Right lobe of liver (tissue), 6 donors: ENCODE measurements at regions of chr7 and their contacts with region 1.

Region 1: DNA sequence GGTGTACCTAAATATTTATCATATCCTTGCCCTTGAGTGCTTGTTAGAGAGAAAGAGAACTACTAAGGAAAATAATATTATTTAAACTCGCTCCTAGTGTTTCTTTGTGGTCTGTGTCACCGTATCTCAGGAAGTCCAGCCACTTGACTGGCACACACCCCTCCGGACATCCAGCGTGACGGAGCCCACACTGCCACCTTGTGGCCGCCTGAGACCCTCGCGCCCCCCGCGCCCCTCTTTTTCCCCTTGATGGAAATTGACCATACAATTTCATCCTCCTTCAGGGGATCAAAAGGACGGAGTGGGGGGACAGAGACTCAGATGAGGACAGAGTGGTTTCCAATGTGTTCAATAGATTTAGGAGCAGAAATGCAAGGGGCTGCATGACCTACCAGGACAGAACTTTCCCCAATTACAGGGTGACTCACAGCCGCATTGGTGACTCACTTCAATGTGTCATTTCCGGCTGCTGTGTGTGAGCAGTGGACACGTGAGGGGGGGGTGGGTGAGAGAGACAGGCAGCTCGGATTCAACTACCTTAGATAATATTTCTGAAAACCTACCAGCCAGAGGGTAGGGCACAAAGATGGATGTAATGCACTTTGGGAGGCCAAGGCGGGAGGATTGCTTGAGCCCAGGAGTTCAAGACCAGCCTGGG is 11.4 kb downstream of the SERPINE1 start:
- DNase-seq: peak; percentile 59 to 86 (median 62)
- ATAC-seq: peak; percentile 72 to 85 (median 74)
- H3K4me3 ChIP-seq: no peak overlapping the region
- H3K27ac ChIP-seq: peak overlapping the region in 2 of 3 donors; percentile 44 to 47
- H3K4me1 ChIP-seq: peaks cover 0 to 7% (median 4%) of the 10 kb centered on the region in 4 donors
- H3K27me3 ChIP-seq: no peaks in the 10 kb centered on the region
- CTCF ChIP-seq: peak; percentile 77 to 80 (median 78)
- POLR2A ChIP-seq: peak; percentile 78

Region 2: DNA sequence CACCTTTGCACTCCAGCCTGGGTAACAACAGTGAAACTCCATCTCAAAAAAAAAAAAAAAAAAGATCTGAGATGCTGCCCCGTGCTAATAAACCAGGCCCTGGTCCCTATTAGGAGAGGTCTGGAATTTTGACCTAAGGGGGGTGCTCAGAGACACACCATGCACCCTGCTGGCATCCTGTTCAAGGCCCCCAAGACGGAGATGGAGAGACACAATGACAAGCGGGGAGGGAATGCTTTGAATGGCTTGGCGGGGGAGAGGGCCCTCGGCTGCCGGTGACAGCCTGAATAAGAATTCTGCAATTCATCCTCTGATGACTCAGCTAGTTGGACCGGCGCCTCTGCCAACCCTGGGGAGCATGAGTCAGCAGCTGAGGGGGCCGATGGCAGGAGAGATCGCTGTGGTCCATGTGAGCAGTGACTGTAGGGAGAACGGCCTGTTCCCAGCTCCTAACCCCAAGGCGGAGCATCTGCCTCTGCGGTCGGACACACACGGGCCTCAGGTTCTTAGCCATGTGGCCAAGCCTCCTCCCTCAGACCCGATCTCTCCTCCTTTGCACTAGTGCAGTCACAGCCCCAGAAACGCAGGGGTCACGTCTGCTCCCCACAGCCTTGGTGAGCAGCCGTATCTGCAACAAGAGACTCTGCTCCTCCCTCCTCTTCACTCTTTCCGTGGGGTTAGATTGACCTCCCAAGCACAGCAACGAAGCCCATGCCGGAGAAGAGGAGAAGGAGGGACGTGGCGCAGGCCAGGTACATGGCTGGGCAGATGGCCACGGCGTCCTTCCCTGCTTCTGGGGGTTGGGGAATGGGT is 38.2 kb before region 1 on chr7:
- intact Hi-C with region 1: loop called in 1 of 2 experiments (anchors 5 kb)
- DNase-seq: peak; percentile 89 to 91 (median 90)
- ATAC-seq: peak; percentile 70 to 79 (median 76)
- H3K4me3 ChIP-seq: no peak overlapping the region
- H3K27ac ChIP-seq: peak overlapping the region; percentile 22 to 68 (median 56)
- H3K4me1 ChIP-seq: peaks cover 2 to 60% (median 29%) of the 10 kb centered on the region in 4 donors
- H3K27me3 ChIP-seq: no peaks in the 10 kb centered on the region
- CTCF ChIP-seq: no peak
- POLR2A ChIP-seq: peak; percentile 39

Region 3: GRCh38 chr7:101197991-101198390 is 59.6 kb after region 1 on chr7:
- intact Hi-C with region 1: loop called (anchors 10 kb)
- DNase-seq: no peak
- ATAC-seq: no peak
- H3K4me3 ChIP-seq: no peak overlapping the region
- H3K27ac ChIP-seq: no peak overlapping the region
- H3K4me1 ChIP-seq: peaks cover 0 to 12% (median 0%) of the 10 kb centered on the region in 4 donors
- H3K27me3 ChIP-seq: no peaks in the 10 kb centered on the region
- CTCF ChIP-seq: no peak
- POLR2A ChIP-seq: no peak

Region 4: GRCh38 chr7:101586078-101586905 is 447.9 kb after region 1 on chr7:
- intact Hi-C with region 1: no loop called
- DNase-seq: peak in 1 of 3 donors; percentile 24
- ATAC-seq: no peak
- H3K4me3 ChIP-seq: no peak overlapping the region
- H3K27ac ChIP-seq: no peak overlapping the region
- H3K4me1 ChIP-seq: no peaks in the 10 kb centered on the region
- H3K27me3 ChIP-seq: no peaks in the 10 kb centered on the region
- CTCF ChIP-seq: no peak
- POLR2A ChIP-seq: no peak